Vagina (tissue), 2 donors: ENCODE measurements at regions of chr7 and their contacts with region 1.

Region 1: GRCh38 chr7:5484921-5485320 is 61.3 kb upstream of the TNRC18 start:
- DNase-seq: no peak
- H3K4me3 ChIP-seq: no peak overlapping the region
- H3K27ac ChIP-seq: no peak overlapping the region
- H3K4me1 ChIP-seq: no peaks in the 10 kb centered on the region
- H3K27me3 ChIP-seq: no peaks in the 10 kb centered on the region
- CTCF ChIP-seq: no peak
- POLR2A ChIP-seq: no peak

Region 2: DNA sequence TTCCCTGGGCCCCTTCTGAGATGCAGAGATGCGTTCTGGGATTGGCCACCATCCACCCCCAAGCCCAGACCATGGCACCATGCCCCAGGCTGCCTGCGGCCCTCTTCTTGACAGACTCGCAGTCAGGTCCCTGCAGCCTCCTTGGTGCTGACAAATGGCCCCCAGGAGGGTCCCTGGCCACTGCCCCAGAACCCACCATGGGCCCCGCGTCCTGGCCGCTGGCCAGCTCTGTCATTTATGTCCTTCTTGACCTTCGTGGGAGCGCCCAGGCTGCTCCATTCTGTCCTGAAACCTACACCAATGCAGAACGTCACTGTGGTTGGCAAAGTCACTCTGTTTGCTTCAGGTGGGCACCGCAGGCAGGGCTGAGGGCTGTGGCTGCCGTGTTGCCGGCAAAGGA is 241.7 kb before region 1 on chr7:
- intact Hi-C with region 1: loop called (anchors 5 kb)
- DNase-seq: no peak
- H3K4me3 ChIP-seq: no peak overlapping the region
- H3K27ac ChIP-seq: no peak overlapping the region
- H3K4me1 ChIP-seq: peaks cover 15% of the 10 kb centered on the region
- H3K27me3 ChIP-seq: no peaks in the 10 kb centered on the region
- CTCF ChIP-seq: no peak
- POLR2A ChIP-seq: no peak

Region 3: DNA sequence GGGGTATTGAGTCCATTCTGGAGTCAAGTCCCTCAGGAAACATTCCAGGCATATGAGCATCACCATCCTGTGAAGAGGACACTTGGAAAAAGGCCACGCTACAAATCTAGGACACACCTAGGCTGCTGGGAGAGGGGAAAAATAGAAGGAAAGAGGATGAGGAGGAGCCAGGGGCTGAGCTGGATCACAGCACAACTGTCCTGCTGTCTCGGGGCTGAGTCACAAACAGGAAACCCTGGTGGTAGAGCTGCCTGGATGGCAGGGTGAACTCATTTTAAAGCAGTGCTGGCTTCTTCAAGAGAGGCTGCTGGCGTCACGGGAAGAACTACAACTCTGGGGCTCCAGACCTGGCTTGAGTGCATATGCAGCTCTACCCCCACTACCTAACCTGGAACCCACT is 145.0 kb after region 1 on chr7:
- intact Hi-C with region 1: no loop called
- DNase-seq: no peak
- H3K4me3 ChIP-seq: no peak overlapping the region
- H3K27ac ChIP-seq: no peak overlapping the region
- H3K4me1 ChIP-seq: peaks cover 43% of the 10 kb centered on the region
- H3K27me3 ChIP-seq: no peaks in the 10 kb centered on the region
- CTCF ChIP-seq: no peak
- POLR2A ChIP-seq: no peak